Mammary epithelial cell (primary cell): ENCODE measurements at regions of chr3 and their contacts with region 1.

Region 1: GRCh38 chr3:29280404-29281093 is at the start of gene RBMS3:
- DNase-seq: peak; percentile 91
- H3K4me3 ChIP-seq: peak within 1 kb of the TSS; percentile 59 to 76 (median 69)
- H3K27ac ChIP-seq: peak within 1 kb of the TSS; percentile 93
- H3K4me1 ChIP-seq: peaks cover 4% of the 10 kb centered on the region
- H3K27me3 ChIP-seq: no peaks in the 10 kb centered on the region
- CTCF ChIP-seq: peak; percentile 30 to 68
- total RNA-seq, gene RBMS3: 31.5 to 51.5 TPM

Region 2: GRCh38 chr3:28667646-28668621 is 612.6 kb before region 1 on chr3:
- CTCF ChIA-PET with region 1: no interaction called
- dilution Hi-C with region 1: no loop called
- in situ Hi-C with region 1: no loop called
- intact Hi-C with region 1: loop called (anchors 5 kb)
- DNase-seq: peak; percentile 50
- H3K4me3 ChIP-seq: no peak overlapping the region
- H3K27ac ChIP-seq: no peak overlapping the region
- H3K4me1 ChIP-seq: no peaks in the 10 kb centered on the region
- H3K27me3 ChIP-seq: no peaks in the 10 kb centered on the region
- CTCF ChIP-seq: peak; percentile 82 to 88

Region 3: DNA sequence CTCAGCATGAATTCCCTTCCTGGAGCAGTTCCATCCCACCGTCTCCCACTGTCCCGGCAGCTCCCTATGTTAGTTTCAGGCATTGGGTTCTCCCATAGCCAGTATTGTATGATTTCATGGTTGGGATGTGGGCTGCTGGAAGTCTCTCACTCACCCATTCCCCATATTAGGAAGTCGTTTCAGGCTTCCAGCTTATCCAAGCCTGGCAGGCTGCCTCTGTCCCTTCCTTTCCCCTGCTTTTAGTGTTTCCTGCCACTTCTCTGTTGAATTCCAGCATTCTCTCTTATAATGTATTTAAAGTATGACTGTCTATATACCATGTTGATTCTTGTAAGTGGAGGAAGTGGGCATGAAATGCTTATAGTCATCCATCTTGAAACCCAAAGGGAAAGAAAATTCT is 309.4 kb before region 1 on chr3:
- CTCF ChIA-PET with region 1: interaction called, 12 read pairs
- dilution Hi-C with region 1: no loop called
- in situ Hi-C with region 1: no loop called
- intact Hi-C with region 1: no loop called
- DNase-seq: no peak
- H3K4me3 ChIP-seq: no peak overlapping the region
- H3K27ac ChIP-seq: no peak overlapping the region
- H3K4me1 ChIP-seq: no peaks in the 10 kb centered on the region
- H3K27me3 ChIP-seq: no peaks in the 10 kb centered on the region
- CTCF ChIP-seq: no peak

Region 4: DNA sequence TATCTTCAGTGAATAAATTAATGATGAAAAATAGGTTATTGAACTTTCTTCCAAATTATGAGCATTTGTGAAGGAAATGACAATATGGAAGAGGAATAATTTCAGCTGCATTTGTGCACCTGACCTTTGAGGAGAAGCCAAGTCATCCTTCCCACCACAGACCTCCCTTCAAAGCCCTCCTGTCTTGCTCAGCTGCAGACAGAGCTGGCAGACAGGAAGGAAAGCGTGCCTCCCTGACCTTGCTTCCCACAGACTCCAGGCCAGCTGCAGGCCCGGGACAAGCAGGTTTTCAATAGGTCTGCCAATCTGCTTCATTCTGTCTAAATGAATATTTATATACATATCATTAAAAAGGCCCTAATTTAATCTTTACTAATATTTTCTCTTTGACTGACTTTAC is 152.5 kb before region 1 on chr3:
- CTCF ChIA-PET with region 1: interaction called, 27 read pairs
- dilution Hi-C with region 1: no loop called
- in situ Hi-C with region 1: no loop called
- intact Hi-C with region 1: no loop called
- DNase-seq: no peak
- H3K4me3 ChIP-seq: no peak overlapping the region
- H3K27ac ChIP-seq: no peak overlapping the region
- H3K4me1 ChIP-seq: no peaks in the 10 kb centered on the region
- H3K27me3 ChIP-seq: no peaks in the 10 kb centered on the region
- CTCF ChIP-seq: no peak

Region 5: DNA sequence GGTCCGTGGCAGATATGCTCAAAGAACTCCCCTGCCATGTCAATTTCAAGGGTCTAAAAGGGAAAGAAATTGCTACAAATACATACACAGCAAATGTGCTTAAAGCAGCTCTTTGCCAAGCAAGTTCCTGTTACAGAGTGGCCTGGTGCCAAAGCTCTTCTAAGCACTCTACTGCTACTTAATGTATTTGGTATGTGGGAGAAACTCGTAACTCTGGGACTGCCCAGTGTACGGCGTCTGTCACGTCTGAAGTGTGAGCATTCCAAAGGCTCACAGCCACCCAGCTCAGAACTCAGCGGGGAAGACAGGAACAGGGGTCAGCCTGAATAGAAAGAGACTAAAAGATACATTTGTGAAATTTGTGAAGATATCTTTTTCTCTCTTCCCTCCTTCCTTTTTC is 54.9 kb after region 1 on chr3:
- CTCF ChIA-PET with region 1: interaction called, 17 read pairs
- dilution Hi-C with region 1: no loop called
- in situ Hi-C with region 1: no loop called
- intact Hi-C with region 1: loop called (anchors 1 kb)
- DNase-seq: peak; percentile 93
- H3K4me3 ChIP-seq: peak overlapping the region; percentile 19 to 32 (median 30)
- H3K27ac ChIP-seq: peak overlapping the region; percentile 94
- H3K4me1 ChIP-seq: peaks cover 48% of the 10 kb centered on the region
- H3K27me3 ChIP-seq: no peaks in the 10 kb centered on the region
- CTCF ChIP-seq: no peak

Region 6: GRCh38 chr3:29693863-29694262 is 413.3 kb after region 1 on chr3:
- CTCF ChIA-PET with region 1: no interaction called
- dilution Hi-C with region 1: no loop called
- in situ Hi-C with region 1: loop called in 1 of 2 experiments (anchors 10 kb)
- intact Hi-C with region 1: loop called (anchors 1 kb)
- DNase-seq: peak; percentile 57
- H3K4me3 ChIP-seq: peak overlapping the region in 1 of 3 experiments; percentile 15
- H3K27ac ChIP-seq: peak overlapping the region; percentile 95
- H3K4me1 ChIP-seq: peaks cover 34% of the 10 kb centered on the region
- H3K27me3 ChIP-seq: no peaks in the 10 kb centered on the region
- CTCF ChIP-seq: no peak